ENCODE measurements at regions of chr11 and their contacts with region 1.

Region 1: DNA sequence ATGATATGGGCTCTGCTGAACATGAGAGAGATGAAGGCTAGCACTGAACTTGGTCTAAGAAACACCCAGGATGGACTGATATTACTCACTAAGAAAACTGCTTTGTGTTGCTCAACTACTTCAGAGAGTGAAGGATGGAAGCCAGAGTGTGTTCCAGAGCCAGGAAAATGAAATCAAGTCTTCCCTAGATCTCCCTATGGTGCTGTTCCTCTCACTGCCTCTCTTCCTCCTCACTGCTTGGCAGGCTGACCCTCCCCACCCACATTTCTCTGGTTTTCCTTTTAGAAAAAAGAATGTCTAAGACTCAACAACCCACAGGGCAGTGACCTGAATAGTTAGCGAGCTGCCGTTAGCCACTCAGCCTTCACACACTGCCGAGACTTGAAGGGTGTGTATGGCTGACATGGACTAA is 65.6 kb downstream of the CCDC81 start:
- DNase-seq: no peak
- H3K4me3 Mint-ChIP-seq: no peak overlapping the region
- H3K27ac Mint-ChIP-seq: no peak overlapping the region
- H3K4me1 Mint-ChIP-seq: peaks cover 22% of the 10 kb centered on the region
- H3K27me3 Mint-ChIP-seq: no peaks in the 10 kb centered on the region
- CTCF ChIP-seq: no peak

Region 2: DNA sequence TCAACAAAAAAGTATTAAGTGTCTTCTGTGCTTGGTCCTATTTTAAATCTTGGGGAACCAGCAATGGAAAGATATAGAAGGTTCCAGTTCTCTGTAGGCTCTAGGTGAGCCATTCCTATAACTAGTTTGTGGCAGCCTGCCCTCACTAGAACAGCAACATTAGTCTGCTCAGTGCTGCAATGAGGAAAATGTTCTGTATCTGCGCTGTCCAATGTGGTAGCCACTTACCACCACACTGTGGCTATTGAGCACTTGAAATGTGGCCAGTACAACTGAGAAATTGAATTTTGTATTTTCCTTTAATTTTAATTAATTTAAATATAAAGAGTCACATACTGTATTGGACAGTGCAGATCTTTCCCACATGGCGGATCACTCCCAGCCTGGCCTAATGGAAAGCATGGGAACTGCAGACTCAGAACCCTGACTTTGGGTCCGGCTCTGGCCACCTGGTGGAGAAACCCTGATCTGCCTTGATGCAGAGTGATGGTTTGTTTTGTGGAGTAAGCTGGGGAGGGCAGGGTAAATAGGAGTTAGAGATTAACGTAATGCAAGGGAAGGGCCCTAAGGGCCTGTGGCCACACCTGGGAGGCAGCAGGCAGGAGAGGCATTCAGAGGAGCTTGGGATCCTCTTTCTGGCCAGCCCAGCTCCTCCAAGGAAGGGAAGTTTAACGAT is 131.1 kb after region 1 on chr11:
- CTCF ChIA-PET with region 1: interaction called, 15 read pairs
- intact Hi-C with region 1: no loop called
- DNase-seq: peak; percentile 22
- H3K4me3 Mint-ChIP-seq: peak overlapping the region; percentile 8
- H3K27ac Mint-ChIP-seq: no peak overlapping the region
- H3K4me1 Mint-ChIP-seq: peaks cover 63% of the 10 kb centered on the region
- H3K27me3 Mint-ChIP-seq: no peaks in the 10 kb centered on the region
- CTCF ChIP-seq: peak; percentile 59